HepG2 (cell line): ENCODE measurements at regions of chr9 and their contacts with region 1.

Region 1: GRCh38 chr9:120348951-120349429 is 231.0 kb downstream of the CDK5RAP2 start:
- DNase-seq: peak; percentile 44
- ATAC-seq: peak; percentile 95
- H3K4me3 ChIP-seq: peak overlapping the region in 1 of 3 experiments; percentile 23; a peak in 1 of 6 replicates
- H3K27ac ChIP-seq: no peak overlapping the region
- H3K4me1 ChIP-seq: no peaks in the 10 kb centered on the region
- H3K27me3 ChIP-seq: no peaks in the 10 kb centered on the region
- CTCF ChIP-seq: peak; percentile 84
- EP300 ChIP-seq: no peak
- POLR2A ChIP-seq: no peak
- RAD21 ChIP-seq: peak; percentile 78

Region 2: DNA sequence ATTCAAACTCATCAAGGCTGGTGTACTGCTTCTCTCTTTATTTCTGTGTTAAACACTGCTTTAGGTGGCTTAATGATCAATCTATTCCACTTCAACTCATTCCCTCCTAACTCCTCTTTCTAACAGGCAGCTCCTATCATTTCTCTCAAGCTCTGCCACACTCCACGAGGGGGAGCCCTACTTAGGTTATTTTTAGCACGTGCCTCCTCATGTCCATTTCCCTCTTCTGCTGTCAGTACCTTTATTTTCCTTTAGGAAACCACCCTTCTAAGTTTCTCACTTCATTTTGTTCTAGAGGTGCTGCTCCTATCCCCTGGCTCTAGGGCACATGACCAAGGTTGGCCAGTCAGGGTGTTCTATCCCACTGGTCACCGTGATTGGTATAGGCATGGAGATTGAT is 973.1 kb before region 1 on chr9:
- CTCF ChIA-PET with region 1: interaction called, 4 read pairs
- POLR2A ChIA-PET with region 1: no interaction called
- in situ Hi-C with region 1: no loop called
- intact Hi-C with region 1: loop called (anchors 2 kb)
- DNase-seq: peak; percentile 29
- ATAC-seq: peak; percentile 55; the same call in 1 of the 3 replicates
- H3K4me3 ChIP-seq: no peak overlapping the region
- H3K27ac ChIP-seq: no peak overlapping the region
- H3K4me1 ChIP-seq: no peaks in the 10 kb centered on the region
- H3K27me3 ChIP-seq: no peaks in the 10 kb centered on the region
- CTCF ChIP-seq: no peak
- EP300 ChIP-seq: no peak
- POLR2A ChIP-seq: no peak
- RAD21 ChIP-seq: no peak

Region 3: GRCh38 chr9:119556129-119556875 is 792.7 kb before region 1 on chr9:
- CTCF ChIA-PET with region 1: interaction called, 8 read pairs
- POLR2A ChIA-PET with region 1: no interaction called
- in situ Hi-C with region 1: loop called (anchors 10 kb)
- intact Hi-C with region 1: loop called (anchors 1 kb)
- DNase-seq: peak; percentile 27
- ATAC-seq: peak; percentile 99
- H3K4me3 ChIP-seq: peak overlapping the region in 1 of 3 experiments; percentile 36; a peak in 1 of 6 replicates
- H3K27ac ChIP-seq: no peak overlapping the region
- H3K4me1 ChIP-seq: no peaks in the 10 kb centered on the region
- H3K27me3 ChIP-seq: no peaks in the 10 kb centered on the region; a peak in 1 of 5 replicates
- CTCF ChIP-seq: peak; percentile 94
- EP300 ChIP-seq: no peak
- POLR2A ChIP-seq: no peak
- RAD21 ChIP-seq: peak; percentile 79

Region 4: DNA sequence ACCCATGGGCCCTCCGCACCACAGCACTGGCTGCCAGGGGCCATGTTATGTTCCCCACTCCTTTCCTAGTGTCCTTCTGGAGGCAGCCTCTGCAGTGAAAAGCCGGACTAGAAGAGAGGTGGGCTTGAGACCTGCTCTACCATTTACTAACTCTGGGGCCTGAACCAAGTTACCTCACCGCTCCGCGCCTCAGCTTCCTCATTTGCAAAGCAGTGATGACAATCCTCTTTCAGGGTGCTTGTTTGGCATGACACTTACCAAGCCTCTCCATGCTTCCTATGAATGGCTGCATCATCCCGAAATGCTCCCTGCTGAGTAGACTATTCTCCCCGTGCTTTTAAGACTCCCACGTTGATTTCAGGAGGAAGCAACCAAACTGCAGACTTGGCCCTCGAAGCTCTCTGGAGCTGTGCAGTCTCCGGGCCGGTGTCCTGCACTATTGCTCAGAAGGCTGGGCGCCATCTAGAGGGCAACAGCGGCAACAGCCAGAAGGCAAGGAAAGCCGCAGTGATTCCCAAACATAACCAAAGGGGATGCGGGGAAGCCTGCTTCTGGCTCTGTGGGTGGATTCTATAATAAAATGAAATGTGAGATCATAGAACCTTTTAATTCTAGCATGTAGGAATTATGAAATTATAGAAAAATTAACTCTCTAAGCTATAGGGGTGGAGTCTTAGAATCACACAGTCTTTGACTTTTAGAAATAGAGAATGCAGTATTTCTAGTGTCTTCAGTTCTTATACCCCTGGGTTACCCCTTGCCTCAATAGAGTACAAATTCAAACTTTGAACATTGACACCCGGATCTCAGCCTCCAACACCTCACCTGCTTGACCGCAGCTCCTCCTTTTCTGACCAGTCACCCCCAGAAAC is 379.9 kb before region 1 on chr9:
- CTCF ChIA-PET with region 1: no interaction called
- POLR2A ChIA-PET with region 1: no interaction called
- in situ Hi-C with region 1: loop called (anchors 10 kb)
- intact Hi-C with region 1: no loop called
- DNase-seq: peak; percentile 28
- ATAC-seq: peak; percentile 99
- H3K4me3 ChIP-seq: no peak overlapping the region
- H3K27ac ChIP-seq: no peak overlapping the region
- H3K4me1 ChIP-seq: peaks cover 13% of the 10 kb centered on the region
- H3K27me3 ChIP-seq: no peaks in the 10 kb centered on the region
- CTCF ChIP-seq: peak; percentile 87
- EP300 ChIP-seq: no peak
- POLR2A ChIP-seq: no peak
- RAD21 ChIP-seq: no peak